Psoas muscle (tissue), 8 donors: ENCODE measurements at regions of chr1 and their contacts with region 1.

Region 1: DNA sequence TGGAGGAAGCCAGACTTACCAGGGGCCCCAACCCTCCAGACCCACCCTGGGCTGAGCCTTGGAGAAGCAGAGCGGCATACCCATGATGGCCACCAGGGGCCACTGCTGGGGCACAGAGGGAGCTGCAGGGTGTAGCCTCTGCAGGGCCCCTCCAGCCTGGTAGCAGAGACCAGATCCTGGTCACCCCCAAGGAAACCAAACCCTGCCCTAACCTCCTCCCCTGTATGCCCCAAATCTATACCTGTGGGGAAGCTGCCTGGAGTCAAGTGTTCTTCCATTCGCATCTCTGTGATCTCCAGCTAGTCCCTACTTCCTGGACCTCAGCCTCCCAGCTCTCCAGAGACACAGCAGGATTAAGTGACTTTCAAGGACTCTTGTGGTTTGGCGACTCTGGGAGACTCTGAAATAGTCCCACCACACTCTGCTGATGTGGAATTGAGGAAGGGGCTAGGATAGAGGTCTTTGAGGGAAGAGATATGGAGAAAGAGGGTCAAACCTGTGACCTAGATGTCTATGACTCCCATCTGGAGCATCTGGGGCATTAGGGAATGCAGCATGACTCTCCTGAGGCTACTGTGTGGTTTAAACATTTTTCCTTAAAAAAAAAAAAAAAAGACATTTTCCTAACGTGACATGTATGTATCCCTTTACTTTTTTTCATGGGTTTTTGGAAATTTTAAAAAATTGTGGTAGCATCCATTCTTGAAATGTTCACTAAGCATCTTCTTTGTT is 119.2 kb upstream of the IPO9 start:
- DNase-seq: peak; percentile 79 to 85
- ATAC-seq: peak; percentile 61 to 74 (median 66)
- H3K4me3 ChIP-seq: no peak overlapping the region
- H3K27ac ChIP-seq: no peak overlapping the region
- H3K4me1 ChIP-seq: peaks cover 34% of the 10 kb centered on the region
- H3K27me3 ChIP-seq: no peaks in the 10 kb centered on the region
- CTCF ChIP-seq: peak; percentile 94

Region 2: DNA sequence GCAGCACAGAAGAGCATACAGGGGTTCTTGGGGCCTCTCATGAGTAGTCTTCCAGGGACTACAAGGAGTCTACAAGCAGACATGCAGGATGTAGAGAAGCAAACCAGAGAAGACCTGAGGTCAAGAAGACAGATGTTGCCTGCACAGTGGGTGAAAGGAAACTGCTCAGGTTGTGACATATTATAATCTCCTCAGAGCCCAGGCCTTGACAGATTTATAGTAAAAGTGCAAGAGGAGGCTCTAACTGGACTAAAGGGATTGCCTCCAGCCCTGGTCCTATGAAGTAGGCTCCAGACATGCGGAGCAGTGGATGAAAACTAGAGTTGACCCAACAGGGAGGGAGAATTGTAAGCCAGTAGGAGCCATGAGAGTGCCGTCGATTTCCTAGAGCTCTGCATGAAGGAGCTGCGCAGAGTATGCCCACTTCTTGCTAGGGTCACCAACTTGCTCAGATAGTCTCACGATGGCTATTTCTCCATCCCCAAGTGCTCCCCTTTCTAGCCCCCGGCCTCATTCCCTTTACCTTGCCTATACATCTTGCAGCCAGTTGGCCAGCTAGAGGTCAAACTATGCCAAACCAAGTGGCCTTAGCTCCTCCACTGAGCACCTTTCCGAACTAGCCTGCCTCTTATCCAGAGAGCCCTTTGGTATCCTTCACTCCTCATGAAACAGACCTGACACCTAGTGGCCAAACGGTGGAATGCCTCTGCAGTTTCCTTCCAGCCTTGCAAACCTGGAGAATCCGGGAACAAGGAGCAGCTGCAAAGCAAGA is 83.0 kb after region 1 on chr1:
- intact Hi-C with region 1: loop called (anchors 1 to 2 kb)
- DNase-seq: peak; percentile 57 to 78
- ATAC-seq: peak; percentile 89 to 94 (median 90)
- H3K4me3 ChIP-seq: no peak overlapping the region
- H3K27ac ChIP-seq: peak overlapping the region; percentile 48
- H3K4me1 ChIP-seq: peaks cover 19% of the 10 kb centered on the region
- H3K27me3 ChIP-seq: peaks cover 0 to 12% (median 0%) of the 10 kb centered on the region in 3 donors
- CTCF ChIP-seq: peak; percentile 92